ENCODE measurements at regions of chr13 and their contacts with region 1.

Region 1: DNA sequence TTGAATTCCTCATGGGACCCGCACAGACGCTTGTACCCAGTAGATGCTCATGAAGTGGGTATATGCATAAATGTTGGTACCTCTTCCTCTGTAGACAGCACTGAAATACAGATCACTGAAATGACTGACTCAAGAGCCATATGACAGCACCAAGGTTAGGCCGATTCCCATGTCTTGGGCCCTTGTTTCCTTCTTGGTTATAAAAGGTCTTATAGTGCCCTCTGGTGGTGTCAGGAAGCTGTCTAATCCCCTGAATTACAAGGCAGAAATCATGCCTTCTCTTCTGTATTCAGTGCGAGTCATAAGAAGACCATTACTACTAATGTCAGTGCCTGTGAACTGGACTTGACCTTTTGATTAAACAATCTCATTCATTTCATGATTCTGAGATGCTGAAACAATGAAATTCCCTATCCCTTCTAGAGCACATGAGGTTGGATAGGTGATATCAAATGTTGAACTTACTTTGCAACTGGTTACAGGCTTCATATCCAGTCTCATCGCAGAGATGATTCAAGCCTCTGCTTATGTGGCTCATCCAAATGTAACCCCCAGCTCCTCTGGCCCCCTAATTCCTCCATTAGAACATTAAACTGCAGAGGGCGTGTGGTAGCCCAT is 59.7 kb downstream of the SPATA13 start:
- DNase-seq: peak; percentile 77
- H3K4me3 ChIP-seq: no peak overlapping the region
- H3K27ac ChIP-seq: no peak overlapping the region
- H3K4me1 ChIP-seq: peaks cover 10% of the 10 kb centered on the region
- H3K27me3 ChIP-seq: no peaks in the 10 kb centered on the region
- CTCF ChIP-seq: peak; percentile 60 to 62
- POLR2A ChIP-seq: no peak

Region 2: DNA sequence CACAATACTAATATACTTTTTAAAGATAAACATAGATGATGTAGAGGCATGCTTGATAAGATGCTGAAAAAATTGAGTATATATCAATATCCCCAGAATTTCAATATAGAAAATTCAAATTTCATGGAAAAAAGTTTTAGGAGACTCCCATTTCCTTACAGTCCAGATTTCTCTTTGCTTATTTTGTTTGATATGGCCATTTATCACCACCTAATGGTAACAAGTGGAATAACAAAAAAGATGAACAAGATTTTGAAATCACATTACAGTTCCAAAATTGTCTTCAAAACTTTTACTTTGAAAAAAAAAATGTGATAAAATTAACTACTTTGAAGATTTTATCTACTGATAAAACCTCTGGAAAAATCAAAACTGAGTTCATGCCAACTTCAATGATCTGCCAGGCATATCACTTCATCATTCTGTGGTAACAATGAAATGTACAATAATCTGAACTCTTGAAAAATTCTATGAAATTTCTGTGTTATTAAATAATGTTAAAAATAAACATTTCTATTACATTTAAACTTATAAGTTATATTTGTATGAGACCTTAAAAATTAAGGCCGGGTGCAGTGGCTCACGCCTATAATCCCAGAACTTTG is 348.5 kb before region 1 on chr13:
- CTCF ChIA-PET with region 1: no interaction called
- POLR2A ChIA-PET with region 1: no interaction called
- dilution Hi-C with region 1: no loop called
- intact Hi-C with region 1: no loop called
- DNase-seq: peak; percentile 27
- H3K4me3 ChIP-seq: no peak overlapping the region
- H3K27ac ChIP-seq: no peak overlapping the region
- H3K4me1 ChIP-seq: peaks cover 14% of the 10 kb centered on the region
- H3K27me3 ChIP-seq: no peaks in the 10 kb centered on the region
- CTCF ChIP-seq: peak in 1 of 2 donors; percentile 41
- POLR2A ChIP-seq: no peak

Region 3: GRCh38 chr13:24148399-24149305 is 71.5 kb before region 1 on chr13:
- CTCF ChIA-PET with region 1: no interaction called
- POLR2A ChIA-PET with region 1: no interaction called
- dilution Hi-C with region 1: no loop called
- intact Hi-C with region 1: loop called (anchors 2 kb)
- DNase-seq: peak; percentile 94
- H3K4me3 ChIP-seq: no peak overlapping the region
- H3K27ac ChIP-seq: peak overlapping the region; percentile 91
- H3K4me1 ChIP-seq: peaks cover 19% of the 10 kb centered on the region
- H3K27me3 ChIP-seq: no peaks in the 10 kb centered on the region
- CTCF ChIP-seq: no peak
- POLR2A ChIP-seq: no peak

Region 4: GRCh38 chr13:24716011-24716410 is 495.8 kb after region 1 on chr13:
- CTCF ChIA-PET with region 1: no interaction called
- POLR2A ChIA-PET with region 1: no interaction called
- dilution Hi-C with region 1: no loop called
- intact Hi-C with region 1: no loop called
- DNase-seq: no peak
- H3K4me3 ChIP-seq: no peak overlapping the region
- H3K27ac ChIP-seq: no peak overlapping the region
- H3K4me1 ChIP-seq: no peaks in the 10 kb centered on the region
- H3K27me3 ChIP-seq: no peaks in the 10 kb centered on the region
- CTCF ChIP-seq: no peak
- POLR2A ChIP-seq: no peak